Lower leg skin (tissue), 4 donors: ENCODE measurements at regions of chr17 and their contacts with region 1.

Region 1: GRCh38 chr17:20992987-20993862 is 49.6 kb downstream of the USP22 start:
- DNase-seq: peak; percentile 61 to 92
- H3K4me3 ChIP-seq: no peak overlapping the region
- CTCF ChIP-seq: peak in 1 of 3 donors; percentile 93
- POLR2A ChIP-seq: no peak

Region 2: DNA sequence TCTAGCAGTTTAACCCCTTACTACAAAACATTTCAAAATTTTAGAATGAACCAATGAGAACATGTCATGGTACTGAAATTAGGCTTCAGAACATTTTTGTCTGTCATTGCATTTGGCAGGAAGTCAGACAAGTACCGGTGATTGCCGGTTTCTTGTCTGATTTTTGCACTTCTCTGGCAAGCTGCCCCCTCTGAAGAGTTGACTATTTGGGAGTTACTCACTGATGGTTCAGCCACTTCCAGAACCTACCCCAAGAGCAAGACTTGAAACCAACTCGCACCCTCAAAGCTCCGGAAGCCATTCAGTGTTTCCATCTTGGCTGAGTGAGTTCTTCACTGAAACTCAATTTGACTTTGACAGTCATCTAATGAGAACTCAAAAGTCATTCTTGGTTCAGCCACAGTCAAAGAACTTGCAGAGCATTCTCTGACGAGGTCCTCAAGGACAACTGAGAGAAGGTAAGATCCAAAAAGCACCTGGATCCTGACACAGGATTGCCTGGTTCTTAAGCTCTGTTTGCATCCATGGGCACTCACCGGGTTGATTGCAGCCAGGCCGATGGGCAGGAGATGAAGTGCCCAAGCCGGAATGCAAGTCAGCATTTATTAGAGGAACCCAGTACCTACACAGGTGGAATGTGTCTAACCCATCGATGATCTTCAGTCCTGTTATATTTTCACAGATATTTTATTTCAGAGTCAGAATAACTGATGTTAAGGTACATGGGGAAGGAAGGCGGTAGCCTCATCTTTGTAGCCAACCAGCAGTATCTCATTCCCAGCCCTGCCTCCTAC is 44.0 kb before region 1 on chr17:
- intact Hi-C with region 1: loop called (anchors 5 kb)
- DNase-seq: no peak
- H3K4me3 ChIP-seq: no peak overlapping the region
- CTCF ChIP-seq: no peak
- POLR2A ChIP-seq: no peak

Region 3: GRCh38 chr17:21126645-21127510 is 133.7 kb after region 1 on chr17 and contains the start of gene DHRS7B:
- intact Hi-C with region 1: no loop called
- DNase-seq: peak; percentile 94 to 99
- H3K4me3 ChIP-seq: peak within 1 kb of the TSS; percentile 84
- CTCF ChIP-seq: no peak
- POLR2A ChIP-seq: no peak
- total RNA-seq, gene DHRS7B: 35.2 to 59.4 (median 39.6) TPM